CD4-positive, alpha-beta memory T cell (primary cell): ENCODE measurements at regions of chr11 and their contacts with region 1.

Region 1: DNA sequence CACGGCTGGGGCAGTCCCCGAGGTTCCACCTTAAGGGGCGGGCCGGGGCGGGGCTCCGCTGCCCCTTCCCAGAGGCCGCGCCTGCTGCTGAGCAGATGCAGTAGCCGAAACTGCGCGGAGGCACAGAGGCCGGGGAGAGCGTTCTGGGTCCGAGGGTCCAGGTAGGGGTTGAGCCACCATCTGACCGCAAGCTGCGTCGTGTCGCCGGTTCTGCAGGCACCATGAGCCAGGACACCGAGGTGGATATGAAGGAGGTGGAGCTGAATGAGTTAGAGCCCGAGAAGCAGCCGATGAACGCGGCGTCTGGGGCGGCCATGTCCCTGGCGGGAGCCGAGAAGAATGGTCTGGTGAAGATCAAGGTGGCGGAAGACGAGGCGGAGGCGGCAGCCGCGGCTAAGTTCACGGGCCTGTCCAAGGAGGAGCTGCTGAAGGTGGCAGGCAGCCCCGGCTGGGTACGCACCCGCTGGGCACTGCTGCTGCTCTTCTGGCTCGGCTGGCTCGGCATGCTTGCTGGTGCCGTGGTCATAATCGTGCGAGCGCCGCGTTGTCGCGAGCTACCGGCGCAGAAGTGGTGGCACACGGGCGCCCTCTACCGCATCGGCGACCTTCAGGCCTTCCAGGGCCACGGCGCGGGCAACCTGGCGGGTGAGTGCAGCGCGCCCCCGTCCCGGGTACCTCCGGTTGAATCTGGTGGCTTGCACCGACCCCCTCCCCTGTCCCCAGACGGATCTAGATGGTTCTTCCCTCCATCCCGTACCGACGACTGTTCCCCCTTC is at the start of gene SLC3A2:
- DNase-seq: peak; percentile 85 to 89 (median 88)
- H3K4me3 ChIP-seq: peak within 1 kb of the TSS; percentile 96 to 98
- H3K4me3 Mint-ChIP-seq: peak within 1 kb of the TSS; percentile 93 to 100 (median 100)
- H3K27ac ChIP-seq: peak within 1 kb of the TSS; percentile 93
- H3K27ac Mint-ChIP-seq: peak within 1 kb of the TSS; percentile 93 to 100 (median 99)
- H3K4me1 ChIP-seq: peaks cover 52% of the 10 kb centered on the region
- H3K4me1 Mint-ChIP-seq: peaks cover 26 to 60% (median 41%) of the 10 kb centered on the region in 4 donors
- H3K27me3 ChIP-seq: no peaks in the 10 kb centered on the region
- H3K27me3 Mint-ChIP-seq: no peaks in the 10 kb centered on the region
- total RNA-seq, gene SLC3A2: 205 to 215 TPM

Region 2: GRCh38 chr11:62573592-62574362 is 307.2 kb before region 1 on chr11 and contains the start of gene EEF1G:
- CTCF ChIA-PET with region 1: no interaction called
- POLR2A ChIA-PET with region 1: interaction called, 9 read pairs
- intact Hi-C with region 1: loop called (anchors 2 kb)
- DNase-seq: peak; percentile 98 to 100 (median 100)
- H3K4me3 ChIP-seq: peak within 1 kb of the TSS; percentile 89 to 100
- H3K4me3 Mint-ChIP-seq: peak within 1 kb of the TSS; percentile 92 to 98 (median 98)
- H3K27ac ChIP-seq: peak within 1 kb of the TSS; percentile 77
- H3K27ac Mint-ChIP-seq: peak within 1 kb of the TSS; percentile 94 to 98 (median 97)
- H3K4me1 ChIP-seq: peaks cover 44% of the 10 kb centered on the region
- H3K4me1 Mint-ChIP-seq: peaks cover 34 to 60% (median 47%) of the 10 kb centered on the region in 4 donors
- H3K27me3 ChIP-seq: no peaks in the 10 kb centered on the region
- H3K27me3 Mint-ChIP-seq: no peaks in the 10 kb centered on the region
- total RNA-seq, gene EEF1G: 1,815 to 1,855 TPM

Region 3: DNA sequence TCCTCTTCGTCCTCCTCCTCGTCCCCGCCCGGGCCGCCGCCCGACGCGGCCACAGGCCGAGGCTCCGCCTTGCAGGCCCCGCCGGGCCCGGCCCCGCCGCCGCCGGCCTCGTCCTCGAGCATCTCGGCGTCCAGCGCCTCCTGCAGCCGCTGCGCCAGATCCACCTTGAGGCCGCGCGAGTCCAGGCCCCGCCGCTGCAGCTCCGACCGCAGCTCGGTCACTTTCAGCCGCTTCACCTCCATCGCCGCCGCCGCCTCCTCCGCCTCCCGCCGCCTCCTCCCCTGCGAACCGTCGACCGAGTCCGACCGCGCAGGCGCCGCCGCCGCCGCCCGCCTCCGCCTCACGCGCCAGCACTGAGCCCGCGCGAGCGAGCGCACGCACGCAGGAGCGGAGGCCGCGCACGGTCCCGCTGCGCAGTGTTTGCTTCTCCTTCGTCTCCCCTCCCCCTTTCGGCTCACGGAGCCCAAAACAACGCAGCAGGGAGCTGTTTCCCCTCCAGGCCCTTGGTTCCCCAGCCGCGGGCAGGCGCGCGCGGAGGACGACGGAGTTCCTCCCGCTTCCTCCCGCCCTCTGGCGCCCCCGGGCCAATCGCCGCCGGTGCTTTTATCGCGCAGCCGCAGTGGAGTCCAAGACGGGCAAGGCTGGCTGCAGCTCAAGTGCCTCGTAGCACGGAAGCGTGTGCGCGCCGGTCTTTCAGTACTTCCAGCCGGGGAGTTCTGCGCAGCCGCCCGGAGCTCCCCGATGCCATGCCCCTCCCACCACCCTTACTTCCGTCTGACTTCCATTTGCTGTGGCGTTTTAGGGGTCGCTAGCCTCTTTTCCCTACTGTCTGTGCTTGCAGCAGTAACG is 153.9 kb before region 1 on chr11 and contains the start of gene HNRNPUL2:
- CTCF ChIA-PET with region 1: interaction called, 7 read pairs
- POLR2A ChIA-PET with region 1: interaction called, 47 read pairs
- intact Hi-C with region 1: loop called (anchors 1 kb)
- DNase-seq: peak; percentile 99
- H3K4me3 ChIP-seq: peak within 1 kb of the TSS; percentile 95 to 99
- H3K4me3 Mint-ChIP-seq: peak within 1 kb of the TSS; percentile 84 to 98 (median 96)
- H3K27ac ChIP-seq: peak within 1 kb of the TSS; percentile 93
- H3K27ac Mint-ChIP-seq: peak within 1 kb of the TSS; percentile 98 to 99 (median 99)
- H3K4me1 ChIP-seq: peaks cover 50% of the 10 kb centered on the region
- H3K4me1 Mint-ChIP-seq: peaks cover 28 to 84% (median 50%) of the 10 kb centered on the region in 4 donors
- H3K27me3 ChIP-seq: no peaks in the 10 kb centered on the region
- H3K27me3 Mint-ChIP-seq: no peaks in the 10 kb centered on the region
- total RNA-seq, gene HNRNPUL2: 79.6 to 83.4 TPM

Region 4: DNA sequence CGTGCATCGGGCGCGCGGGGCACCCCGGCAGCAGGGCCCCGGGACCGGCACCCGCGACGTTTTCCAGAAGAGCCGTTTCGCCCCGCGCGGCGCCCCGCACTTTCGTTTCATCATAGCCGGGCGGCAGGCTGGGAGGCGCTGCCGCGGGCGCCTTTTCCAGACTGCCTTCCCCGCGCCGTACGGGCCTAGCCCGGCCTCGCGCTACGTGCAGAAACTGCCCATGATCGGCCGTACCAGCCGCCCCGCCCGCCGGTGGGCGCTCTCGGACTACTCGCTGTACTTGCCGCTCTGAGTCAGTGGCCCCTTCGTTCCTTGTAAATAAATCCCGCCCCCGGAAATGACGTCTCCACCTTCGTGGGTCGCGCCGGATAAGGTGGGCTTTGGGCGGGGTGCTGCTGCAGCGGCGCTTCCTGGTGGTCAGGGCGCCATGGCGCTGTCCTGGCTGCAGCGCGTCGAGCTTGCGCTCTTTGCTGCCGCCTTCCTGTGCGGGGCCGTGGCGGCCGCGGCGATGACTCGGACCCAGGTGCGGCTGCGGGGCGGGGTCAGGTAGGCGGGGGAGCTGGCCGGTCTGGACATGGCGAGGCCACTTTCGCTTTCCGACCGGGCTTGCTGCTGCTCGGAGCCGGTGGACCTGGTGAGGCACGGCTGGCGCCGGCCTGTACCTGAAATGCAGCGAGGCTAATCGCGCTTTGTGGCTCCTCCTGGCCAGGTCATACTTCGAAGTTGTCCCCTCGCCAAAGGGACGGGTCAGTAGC is 93.8 kb before region 1 on chr11 and contains the start of gene TMEM179B:
- CTCF ChIA-PET with region 1: interaction called, 19 read pairs
- POLR2A ChIA-PET with region 1: interaction called, 77 read pairs
- intact Hi-C with region 1: loop called (anchors 1 kb)
- DNase-seq: peak; percentile 95 to 99 (median 96)
- H3K4me3 ChIP-seq: peak within 1 kb of the TSS; percentile 73 to 95
- H3K4me3 Mint-ChIP-seq: peak within 1 kb of the TSS; percentile 93 to 97 (median 96)
- H3K27ac ChIP-seq: peak within 1 kb of the TSS; percentile 84
- H3K27ac Mint-ChIP-seq: peak within 1 kb of the TSS; percentile 89 to 98 (median 97)
- H3K4me1 ChIP-seq: peaks cover 45% of the 10 kb centered on the region
- H3K4me1 Mint-ChIP-seq: peaks cover 29 to 61% (median 47%) of the 10 kb centered on the region in 4 donors
- H3K27me3 ChIP-seq: no peaks in the 10 kb centered on the region
- H3K27me3 Mint-ChIP-seq: no peaks in the 10 kb centered on the region
- total RNA-seq, gene TMEM179B: 66.3 to 66.6 TPM

Region 5: DNA sequence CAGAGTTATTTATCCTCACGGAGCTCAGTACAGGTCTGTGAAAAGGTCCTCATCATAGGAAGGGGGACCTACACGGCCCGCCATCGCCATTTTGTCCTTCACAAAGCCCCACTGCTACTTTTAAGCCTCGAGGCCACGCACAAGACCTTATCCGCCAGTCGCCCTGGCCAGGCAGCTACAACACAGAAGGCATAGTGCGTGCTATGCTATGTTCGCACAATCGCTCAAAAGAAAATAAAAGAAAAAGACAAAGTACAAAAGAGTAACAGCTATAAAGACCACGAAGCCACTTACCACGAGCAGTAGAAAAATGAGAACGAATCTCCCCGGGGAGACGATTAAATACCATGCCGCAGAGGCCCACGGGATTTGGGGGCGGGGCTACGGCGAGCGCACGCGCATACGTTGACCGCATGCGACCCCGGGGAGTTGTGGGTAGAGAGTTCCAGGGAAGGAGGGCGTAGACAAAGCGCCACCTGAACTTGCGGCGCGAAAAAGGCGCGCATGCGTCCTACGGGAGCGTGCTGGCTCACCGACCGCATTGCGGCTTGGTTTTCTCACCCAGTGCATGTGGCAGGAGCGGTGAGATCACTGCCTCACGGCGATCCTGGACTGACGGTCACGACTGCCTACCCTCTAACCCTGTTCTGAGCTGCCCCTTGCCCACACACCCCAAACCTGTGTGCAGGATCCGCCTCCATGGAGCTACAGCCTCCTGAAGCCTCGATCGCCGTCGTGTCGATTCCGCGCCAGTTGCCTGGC is 25.2 kb before region 1 on chr11:
- CTCF ChIA-PET with region 1: interaction called, 11 read pairs
- POLR2A ChIA-PET with region 1: interaction called, 138 read pairs
- intact Hi-C with region 1: loop called (anchors 1 kb)
- DNase-seq: peak; percentile 98 to 99 (median 99)
- H3K4me3 ChIP-seq: peak overlapping the region; percentile 89 to 91
- H3K4me3 Mint-ChIP-seq: peak overlapping the region; percentile 95 to 99 (median 96)
- H3K27ac ChIP-seq: peak overlapping the region; percentile 78
- H3K27ac Mint-ChIP-seq: peak overlapping the region; percentile 93 to 98 (median 95)
- H3K4me1 ChIP-seq: peaks cover 57% of the 10 kb centered on the region
- H3K4me1 Mint-ChIP-seq: peaks cover 41 to 67% (median 55%) of the 10 kb centered on the region in 4 donors
- H3K27me3 ChIP-seq: no peaks in the 10 kb centered on the region
- H3K27me3 Mint-ChIP-seq: no peaks in the 10 kb centered on the region

Region 6: GRCh38 chr11:62912268-62912667 is 31.3 kb after region 1 on chr11:
- CTCF ChIA-PET with region 1: no interaction called
- POLR2A ChIA-PET with region 1: no interaction called
- intact Hi-C with region 1: no loop called
- DNase-seq: no peak
- H3K4me3 ChIP-seq: no peak overlapping the region
- H3K4me3 Mint-ChIP-seq: no peak overlapping the region
- H3K27ac ChIP-seq: no peak overlapping the region
- H3K27ac Mint-ChIP-seq: no peak overlapping the region
- H3K4me1 ChIP-seq: no peaks in the 10 kb centered on the region
- H3K4me1 Mint-ChIP-seq: peaks cover 0 to 6% (median under 1%) of the 10 kb centered on the region in 4 donors
- H3K27me3 ChIP-seq: no peaks in the 10 kb centered on the region
- H3K27me3 Mint-ChIP-seq: peaks cover 3 to 11% of the 10 kb centered on the region in 2 donors

Region 7: DNA sequence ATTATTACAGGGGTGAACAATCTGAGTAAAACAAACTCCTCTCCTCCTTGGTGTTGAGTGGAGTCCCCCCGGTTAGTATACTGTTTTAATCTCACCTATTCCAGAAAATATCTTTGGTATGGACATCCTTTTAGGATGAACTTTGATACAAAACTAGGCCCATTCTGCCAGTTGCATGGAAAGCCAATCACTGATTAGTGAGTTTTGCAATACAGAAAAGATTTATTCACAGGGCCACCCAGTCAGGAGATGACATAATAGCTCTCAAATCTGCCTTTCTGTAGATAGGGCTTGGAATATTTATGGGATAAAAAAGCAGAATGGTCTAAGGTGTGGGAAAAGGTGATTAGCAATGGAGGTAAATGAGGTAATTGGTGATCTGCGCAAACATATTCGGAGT is 392.7 kb after region 1 on chr11:
- CTCF ChIA-PET with region 1: no interaction called
- POLR2A ChIA-PET with region 1: no interaction called
- intact Hi-C with region 1: no loop called
- DNase-seq: no peak
- H3K4me3 ChIP-seq: no peak overlapping the region
- H3K4me3 Mint-ChIP-seq: no peak overlapping the region
- H3K27ac ChIP-seq: no peak overlapping the region
- H3K27ac Mint-ChIP-seq: no peak overlapping the region
- H3K4me1 ChIP-seq: no peaks in the 10 kb centered on the region
- H3K4me1 Mint-ChIP-seq: no peaks in the 10 kb centered on the region
- H3K27me3 ChIP-seq: no peaks in the 10 kb centered on the region
- H3K27me3 Mint-ChIP-seq: peaks cover 4 to 28% of the 10 kb centered on the region in 2 donors